ENCODE measurements at regions of chr2 and their contacts with region 1.

Region 1: GRCh38 chr2:242088471-242089212 is 219.1 kb downstream of the RTP5 start:
- DNase-seq: peak; percentile 94
- H3K4me3 Mint-ChIP-seq: peak overlapping the region; percentile 89
- H3K27ac Mint-ChIP-seq: peak overlapping the region; percentile 86
- H3K4me1 Mint-ChIP-seq: peaks cover 38% of the 10 kb centered on the region
- H3K27me3 Mint-ChIP-seq: peaks cover 3% of the 10 kb centered on the region

Region 2: GRCh38 chr2:241965931-241966412 is 122.7 kb before region 1 on chr2:
- intact Hi-C with region 1: loop called (anchors 5 kb)
- DNase-seq: peak; percentile 21
- H3K4me3 Mint-ChIP-seq: peak overlapping the region; percentile 72
- H3K27ac Mint-ChIP-seq: peak overlapping the region; percentile 83
- H3K4me1 Mint-ChIP-seq: peaks cover 21% of the 10 kb centered on the region
- H3K27me3 Mint-ChIP-seq: no peaks in the 10 kb centered on the region

Region 3: DNA sequence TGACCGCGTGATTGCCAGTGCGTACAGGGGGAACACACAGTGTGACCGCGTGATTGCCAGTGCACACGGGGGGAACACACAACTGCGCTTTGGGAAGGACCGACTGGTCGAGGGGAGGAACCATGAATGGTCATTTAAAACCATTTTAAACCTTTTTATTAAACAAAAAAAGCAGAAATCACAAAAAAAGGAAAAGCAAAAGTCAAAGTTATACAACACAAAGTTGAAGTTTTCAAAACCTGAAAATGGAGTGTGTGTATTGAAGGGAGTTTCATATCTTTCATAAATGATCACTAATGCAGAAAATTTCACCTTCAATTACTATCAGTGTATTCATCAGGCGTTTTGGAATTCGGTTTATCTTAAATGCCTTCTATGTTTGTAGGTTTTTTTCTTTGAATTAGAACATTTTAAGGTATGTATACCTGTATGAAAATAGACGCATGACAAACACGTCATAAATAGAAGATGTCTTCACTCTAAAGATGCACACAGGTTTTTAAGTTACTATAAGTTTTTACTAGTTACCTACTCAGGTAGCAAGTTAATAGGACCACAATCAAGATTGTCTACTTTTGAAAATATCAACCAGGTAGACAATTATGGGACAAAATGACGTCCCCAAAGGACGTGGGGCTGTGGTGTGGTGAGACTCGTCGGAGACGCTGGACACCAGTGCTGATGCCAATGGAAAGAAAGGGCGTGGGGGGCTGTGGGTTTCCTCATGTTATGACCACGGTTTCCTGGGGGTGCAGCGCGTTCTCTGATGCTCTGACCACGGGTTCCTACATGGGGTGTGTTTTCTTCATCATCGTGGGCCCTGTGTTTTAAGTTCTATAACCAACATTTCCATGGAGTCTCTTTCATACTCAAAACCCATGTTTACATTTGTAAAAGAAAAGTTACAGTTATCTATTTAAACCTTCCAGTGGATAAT is 77.8 kb before region 1 on chr2:
- intact Hi-C with region 1: loop called (anchors 2 kb)
- DNase-seq: no peak
- H3K4me3 Mint-ChIP-seq: no peak overlapping the region
- H3K27ac Mint-ChIP-seq: peak overlapping the region; percentile 40
- H3K4me1 Mint-ChIP-seq: peaks cover 9% of the 10 kb centered on the region
- H3K27me3 Mint-ChIP-seq: peaks cover 1% of the 10 kb centered on the region

Region 4: GRCh38 chr2:242031481-242032019 is 57.1 kb before region 1 on chr2:
- intact Hi-C with region 1: loop called (anchors 5 kb)
- DNase-seq: peak; percentile 46
- H3K4me3 Mint-ChIP-seq: peak overlapping the region; percentile 70
- H3K27ac Mint-ChIP-seq: peak overlapping the region; percentile 49
- H3K4me1 Mint-ChIP-seq: peaks cover 16% of the 10 kb centered on the region
- H3K27me3 Mint-ChIP-seq: peaks cover 34% of the 10 kb centered on the region

Measured in activated T-helper 1 cell treated with anti-CD3 and anti-CD28 coated beads, Interleukin-12 subunit alpha, Interleukin-12 subunit beta, Interleukin-2, Interleukin-4 antibody, amounts not matched to agents 30 ng/mL and 10 ng/mL and 1 ng/mL, durations not matched to agents 14 hours and 24 hours and 36 hours (primary cell).